IMR-90 (cell line): ENCODE measurements at regions of chr12 and their contacts with region 1.

Region 1: DNA sequence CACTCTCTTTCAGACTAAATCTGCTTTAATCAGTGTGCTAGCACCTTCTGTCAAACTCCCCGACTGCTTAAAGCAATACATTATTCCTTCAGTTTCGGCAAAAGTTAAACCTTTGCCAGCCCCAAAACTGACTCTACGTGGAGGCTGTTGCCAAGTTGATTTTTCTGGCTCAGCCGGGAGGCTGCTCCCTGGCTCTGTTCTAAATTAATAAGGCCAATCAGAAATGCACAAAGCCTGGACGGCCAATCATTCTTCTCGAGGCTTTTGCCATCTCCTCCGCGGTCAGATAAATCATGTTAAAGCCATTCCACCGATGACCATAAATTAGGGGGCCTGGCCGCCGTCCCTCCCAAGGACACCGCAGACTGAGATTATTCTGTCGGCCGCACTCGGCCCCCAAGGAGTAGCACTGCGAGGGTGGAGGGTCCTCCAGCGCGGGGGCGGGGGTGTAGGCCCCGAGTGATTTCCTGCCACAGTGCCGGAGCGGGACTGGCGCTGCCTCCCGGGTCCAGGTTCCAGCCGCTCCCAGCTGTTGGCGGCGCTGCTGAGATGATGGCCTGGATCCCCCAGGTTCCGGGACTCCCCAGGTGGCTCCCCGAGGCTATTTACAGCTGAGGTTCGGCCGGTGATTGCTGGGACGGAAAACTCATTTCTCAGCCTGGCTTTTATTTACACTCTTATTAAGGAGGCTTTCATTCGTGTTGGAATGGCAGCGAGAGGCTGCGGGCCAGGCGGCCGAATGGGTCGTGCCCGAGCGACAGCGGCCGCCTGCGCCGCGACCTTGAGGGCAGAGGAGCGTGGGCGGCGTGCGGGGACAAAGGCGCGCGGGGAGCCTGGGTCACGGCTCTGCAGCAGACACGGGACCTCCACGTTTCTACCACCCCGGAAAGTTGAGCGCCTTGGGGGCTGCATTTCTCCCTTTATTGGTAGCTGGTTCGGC is 165.1 kb downstream of the MON2 start:
- DNase-seq: peak; percentile 61
- ATAC-seq: peak; percentile 92
- H3K4me3 ChIP-seq: peak overlapping the region; percentile 50
- H3K27ac ChIP-seq: no peak overlapping the region
- H3K4me1 ChIP-seq: no peaks in the 10 kb centered on the region
- H3K27me3 ChIP-seq: peaks cover 5% of the 10 kb centered on the region
- CTCF ChIP-seq: peak; percentile 28; the same call in 1 of the 2 replicates
- POLR2A ChIP-seq: no peak
- RAD21 ChIP-seq: no peak

Region 2: DNA sequence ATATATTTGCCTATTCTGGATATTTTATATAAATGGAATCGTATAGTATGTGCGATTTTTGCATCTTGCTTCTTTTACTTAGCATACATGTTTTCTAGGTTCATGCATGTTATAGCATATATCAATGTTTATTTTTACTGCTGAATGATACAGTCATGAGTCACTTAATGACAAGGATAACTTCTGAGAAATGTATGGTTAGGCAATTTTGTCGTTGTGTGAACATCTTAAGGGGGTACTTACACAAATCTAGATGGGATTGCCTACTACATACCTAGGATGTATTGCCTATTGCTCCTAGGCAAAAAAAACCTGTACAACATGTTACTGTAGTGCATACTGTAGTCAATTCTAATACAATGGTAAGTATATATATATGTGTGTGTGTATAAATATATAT is 362.8 kb before region 1 on chr12:
- CTCF ChIA-PET with region 1: no interaction called
- POLR2A ChIA-PET with region 1: no interaction called
- dilution Hi-C with region 1: no loop called
- in situ Hi-C with region 1: no loop called
- intact Hi-C with region 1: no loop called
- DNase-seq: peak; percentile 85
- ATAC-seq: peak; percentile 55
- H3K4me3 ChIP-seq: no peak overlapping the region
- H3K27ac ChIP-seq: no peak overlapping the region
- H3K4me1 ChIP-seq: peaks cover 11% of the 10 kb centered on the region
- H3K27me3 ChIP-seq: no peaks in the 10 kb centered on the region
- CTCF ChIP-seq: no peak
- POLR2A ChIP-seq: no peak
- RAD21 ChIP-seq: no peak

Region 3: DNA sequence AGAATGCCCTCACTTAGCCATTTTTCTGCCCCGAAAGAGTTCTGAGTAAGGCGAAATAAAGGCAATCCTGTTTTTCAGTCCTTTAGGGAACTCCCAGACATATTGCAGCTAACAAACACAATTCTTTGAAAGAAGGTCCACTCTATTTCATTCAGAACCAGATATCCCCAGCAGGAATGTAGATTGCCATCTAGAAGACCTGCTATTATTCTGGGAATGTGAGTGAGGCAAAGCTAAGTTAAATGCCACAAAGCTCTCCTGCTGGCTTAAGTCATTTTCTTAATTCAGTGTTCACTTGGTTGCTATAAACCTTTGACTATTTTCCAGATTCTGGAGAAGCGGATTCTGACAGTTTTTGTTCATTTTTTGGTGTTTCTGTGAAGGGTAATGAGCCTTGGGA is 174.1 kb before region 1 on chr12:
- CTCF ChIA-PET with region 1: no interaction called
- POLR2A ChIA-PET with region 1: interaction called, 10 read pairs
- dilution Hi-C with region 1: no loop called
- in situ Hi-C with region 1: no loop called
- intact Hi-C with region 1: no loop called
- DNase-seq: no peak
- ATAC-seq: no peak
- H3K4me3 ChIP-seq: no peak overlapping the region
- H3K27ac ChIP-seq: no peak overlapping the region
- H3K4me1 ChIP-seq: no peaks in the 10 kb centered on the region
- H3K27me3 ChIP-seq: peaks cover 2% of the 10 kb centered on the region
- CTCF ChIP-seq: no peak
- POLR2A ChIP-seq: no peak
- RAD21 ChIP-seq: no peak

Region 4: DNA sequence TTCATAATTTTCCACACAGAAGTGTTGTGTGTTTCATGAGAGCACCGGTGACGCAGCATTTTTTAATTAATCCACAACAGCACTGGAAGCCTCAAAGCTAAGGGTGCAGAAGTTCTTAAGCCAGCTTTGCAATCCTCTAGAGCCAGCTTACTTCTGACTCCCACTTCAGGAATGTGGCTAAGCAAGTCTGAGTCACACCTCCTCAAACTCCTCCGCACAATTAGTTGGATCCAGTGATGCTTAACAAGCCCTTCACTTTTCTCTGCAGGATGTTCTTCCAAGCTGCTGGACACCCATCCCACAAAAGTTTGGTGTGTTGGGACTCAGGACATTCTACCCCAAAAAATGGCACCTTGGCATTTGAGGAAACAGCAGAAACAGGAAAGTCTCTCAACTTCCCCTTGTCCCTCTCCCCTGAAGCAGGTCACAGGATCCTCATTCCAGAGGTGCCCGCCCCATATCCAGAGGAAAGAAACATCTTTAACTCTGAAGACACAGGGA is 93.3 kb after region 1 on chr12:
- CTCF ChIA-PET with region 1: no interaction called
- POLR2A ChIA-PET with region 1: no interaction called
- dilution Hi-C with region 1: no loop called
- in situ Hi-C with region 1: no loop called
- intact Hi-C with region 1: loop called (anchors 2 kb)
- DNase-seq: peak; percentile 96
- ATAC-seq: peak; percentile 88
- H3K4me3 ChIP-seq: no peak overlapping the region
- H3K27ac ChIP-seq: peak overlapping the region; percentile 72
- H3K4me1 ChIP-seq: peaks cover 20% of the 10 kb centered on the region
- H3K27me3 ChIP-seq: no peaks in the 10 kb centered on the region
- CTCF ChIP-seq: no peak
- POLR2A ChIP-seq: no peak
- RAD21 ChIP-seq: no peak; the same call in 1 of the 2 replicates